ENCODE measurements at regions of chr7 and their contacts with region 1.

Region 1: GRCh38 chr7:112010994-112011393 is 195.2 kb downstream of the DOCK4 start:
- DNase-seq: no peak

Region 2: GRCh38 chr7:111953611-111954010 is 57.4 kb before region 1 on chr7:
- intact Hi-C with region 1: loop called in 1 of 2 experiments (anchors 2 kb)
- DNase-seq: no peak

Region 3: GRCh38 chr7:112302566-112302965 is 291.6 kb after region 1 on chr7:
- intact Hi-C with region 1: loop called in 1 of 2 experiments (anchors 2 kb)
- DNase-seq: no peak